ENCODE measurements at regions of chr14 and their contacts with region 1.

Region 1: DNA sequence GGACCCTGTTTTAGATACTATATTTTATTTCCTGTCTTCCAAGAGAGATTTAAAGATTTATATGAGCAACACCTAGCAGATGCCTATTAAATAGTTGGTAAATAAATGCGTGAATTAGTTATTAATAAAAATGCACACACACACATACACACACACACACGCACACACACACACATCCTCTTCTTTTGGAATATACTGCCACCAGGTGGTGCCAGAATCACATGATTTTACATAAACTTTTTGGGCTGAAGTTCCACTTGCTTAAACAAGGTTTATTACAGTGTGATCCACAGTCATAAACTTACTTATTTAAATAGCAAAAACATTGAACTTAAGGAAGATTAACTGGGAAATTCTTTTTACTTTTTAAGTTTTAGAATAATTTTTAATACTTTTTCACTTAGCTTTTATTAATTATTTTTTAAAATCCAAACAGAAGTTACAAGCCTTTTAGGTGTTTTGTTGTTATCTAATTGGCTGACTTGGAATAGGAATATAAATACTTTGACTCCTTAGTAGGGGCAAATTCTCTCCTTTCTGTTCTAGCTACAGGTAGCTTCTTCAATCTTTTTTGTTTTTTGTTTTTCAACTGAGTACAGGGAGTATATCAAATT is 17.5 kb downstream of the RAD51B start:
- DNase-seq: peak; percentile 62
- H3K4me3 ChIP-seq: no peak overlapping the region
- H3K27ac ChIP-seq: no peak overlapping the region
- H3K4me1 ChIP-seq: peaks cover 0 to 8% (median 2%) of the 10 kb centered on the region in 4 donors
- H3K27me3 ChIP-seq: no peaks in the 10 kb centered on the region
- CTCF ChIP-seq: peak; percentile 51 to 84 (median 59)
- EP300 ChIP-seq: no peak
- POLR2A ChIP-seq: no peak

Region 2: GRCh38 chr14:67158566-67158965 is 678.6 kb before region 1 on chr14:
- in situ Hi-C with region 1: no loop called
- intact Hi-C with region 1: no loop called
- DNase-seq: no peak
- H3K4me3 ChIP-seq: no peak overlapping the region
- H3K27ac ChIP-seq: no peak overlapping the region
- H3K4me1 ChIP-seq: no peaks in the 10 kb centered on the region
- H3K27me3 ChIP-seq: no peaks in the 10 kb centered on the region
- CTCF ChIP-seq: no peak
- EP300 ChIP-seq: no peak
- POLR2A ChIP-seq: no peak

Region 3: DNA sequence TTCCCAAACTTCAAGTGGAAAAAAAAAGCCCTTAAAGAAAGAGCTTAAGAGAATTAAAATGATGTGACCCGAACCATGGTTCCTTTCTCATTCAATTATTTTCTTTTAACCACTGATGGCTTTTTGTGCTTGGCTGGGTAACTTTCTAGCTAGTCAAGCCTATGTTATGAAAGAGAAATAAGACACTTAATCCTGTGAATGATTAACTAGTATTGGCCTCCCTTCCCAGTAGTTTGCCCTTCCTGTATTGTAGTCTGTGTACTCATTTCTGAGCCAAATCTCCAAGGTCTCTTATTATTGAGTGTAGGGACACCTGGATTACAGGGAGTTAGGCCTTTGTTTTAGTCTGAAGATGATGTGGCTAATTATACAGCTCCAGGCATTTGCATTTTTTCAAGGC is 335.5 kb after region 1 on chr14:
- in situ Hi-C with region 1: no loop called
- intact Hi-C with region 1: no loop called
- DNase-seq: no peak
- H3K4me3 ChIP-seq: no peak overlapping the region
- H3K27ac ChIP-seq: peak overlapping the region; percentile 78 to 84 (median 80)
- H3K4me1 ChIP-seq: peaks cover 37 to 73% (median 56%) of the 10 kb centered on the region in 4 donors
- H3K27me3 ChIP-seq: no peaks in the 10 kb centered on the region
- CTCF ChIP-seq: no peak
- EP300 ChIP-seq: no peak
- POLR2A ChIP-seq: no peak

Region 4: GRCh38 chr14:68824517-68825347 is 987.6 kb after region 1 on chr14:
- in situ Hi-C with region 1: loop called in 3 of 4 experiments (anchors 10 to 25 kb)
- intact Hi-C with region 1: no loop called
- DNase-seq: peak; percentile 87
- H3K4me3 ChIP-seq: no peak overlapping the region
- H3K27ac ChIP-seq: no peak overlapping the region
- H3K4me1 ChIP-seq: peaks cover under 1 to 10% (median 4%) of the 10 kb centered on the region in 4 donors
- H3K27me3 ChIP-seq: no peaks in the 10 kb centered on the region
- CTCF ChIP-seq: peak; percentile 79 to 86 (median 81)
- EP300 ChIP-seq: no peak
- POLR2A ChIP-seq: no peak

Region 5: GRCh38 chr14:68843471-68844209 is 1006.5 kb after region 1 on chr14:
- in situ Hi-C with region 1: loop called in 3 of 4 experiments (anchors 10 to 25 kb)
- intact Hi-C with region 1: no loop called
- DNase-seq: peak; percentile 83
- H3K4me3 ChIP-seq: peak overlapping the region in 2 of 4 donors; percentile 9 to 30
- H3K27ac ChIP-seq: peak overlapping the region; percentile 41 to 74 (median 52)
- H3K4me1 ChIP-seq: peaks cover 10 to 21% (median 15%) of the 10 kb centered on the region in 4 donors
- H3K27me3 ChIP-seq: no peaks in the 10 kb centered on the region
- CTCF ChIP-seq: peak; percentile 82 to 96 (median 91)
- EP300 ChIP-seq: no peak
- POLR2A ChIP-seq: no peak